Left ventricle myocardium inferior (tissue), 1 donor: ENCODE measurements at regions of chr1 and their contacts with region 1.

Region 1: GRCh38 chr1:221203224-221204054 is 324.2 kb downstream of the HLX start:
- DNase-seq: peak; percentile 76
- H3K4me3 ChIP-seq: peak overlapping the region; percentile 6
- H3K27ac ChIP-seq: peak overlapping the region; percentile 83
- H3K4me1 ChIP-seq: peaks cover 35% of the 10 kb centered on the region
- H3K27me3 ChIP-seq: no peaks in the 10 kb centered on the region
- CTCF ChIP-seq: peak; percentile 92

Region 2: DNA sequence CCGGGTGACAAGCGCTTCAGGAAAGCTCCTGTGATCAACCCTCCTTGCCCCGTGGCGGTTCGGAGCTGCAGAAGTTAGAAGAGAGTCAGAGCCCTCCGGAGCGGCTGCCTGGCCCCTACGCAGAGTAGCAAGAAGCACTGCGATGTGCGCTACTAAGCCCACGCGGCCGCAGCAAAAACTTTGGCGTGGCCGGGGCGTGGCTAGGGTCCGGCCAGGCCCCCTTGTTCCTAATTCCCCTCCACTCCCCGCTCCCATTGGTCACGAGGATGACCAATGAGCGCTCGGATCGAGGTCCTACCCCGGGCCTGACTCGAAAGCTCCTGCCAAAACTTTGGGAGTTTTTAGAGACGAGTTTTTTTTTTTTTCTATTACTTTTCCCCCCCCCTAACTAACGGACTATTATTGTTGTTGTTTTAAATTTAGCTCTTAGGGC is 324.3 kb before region 1 on chr1 and contains the start of gene HLX:
- intact Hi-C with region 1: loop called (anchors 10 kb)
- DNase-seq: peak; percentile 93
- H3K4me3 ChIP-seq: peak within 1 kb of the TSS; percentile 99
- H3K27ac ChIP-seq: peak within 1 kb of the TSS; percentile 99
- H3K4me1 ChIP-seq: peaks cover 85% of the 10 kb centered on the region
- H3K27me3 ChIP-seq: peaks cover 25% of the 10 kb centered on the region
- CTCF ChIP-seq: no peak
- total RNA-seq, gene HLX: 3.5 TPM

Region 3: DNA sequence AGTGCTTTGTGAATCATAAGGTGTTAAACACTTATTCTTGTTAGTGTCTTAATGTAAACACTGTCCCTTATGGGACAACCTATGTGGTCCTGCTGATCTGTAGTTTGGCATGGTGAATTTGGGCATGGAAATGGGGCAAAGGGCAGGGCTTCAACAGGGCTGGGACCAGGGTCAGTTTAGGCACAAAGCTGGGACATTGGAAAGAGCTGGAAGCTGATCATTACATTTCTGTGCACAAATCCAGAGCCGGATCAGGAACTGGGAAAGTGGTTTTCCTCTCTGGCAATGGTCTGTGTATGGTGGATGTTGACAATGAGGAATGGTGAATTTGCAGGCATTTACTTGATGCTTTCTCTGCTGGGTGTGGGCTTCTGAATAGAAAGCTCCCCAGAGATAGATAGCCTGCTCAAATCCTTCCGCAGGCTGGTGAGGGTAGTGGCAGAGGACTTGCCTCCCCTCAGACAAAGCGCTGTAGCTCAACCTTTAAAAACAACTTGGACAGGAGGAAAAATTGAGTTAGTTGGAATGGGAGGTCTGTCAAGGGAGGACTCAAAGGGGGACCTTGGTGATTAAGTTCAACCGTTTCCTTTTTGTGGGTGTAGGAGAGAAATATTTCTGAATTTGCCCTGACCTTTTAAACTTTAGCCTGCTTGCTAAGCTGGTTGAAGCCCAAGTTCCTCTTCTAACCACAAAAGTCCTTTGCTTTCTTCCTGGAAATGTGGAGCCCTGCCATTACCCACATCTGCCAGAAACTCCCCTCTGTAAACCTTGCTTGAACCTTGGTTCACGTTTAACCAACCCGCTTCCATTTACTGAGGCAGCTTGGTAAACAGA is 288.9 kb before region 1 on chr1:
- intact Hi-C with region 1: loop called (anchors 10 kb)
- DNase-seq: no peak
- H3K4me3 ChIP-seq: no peak overlapping the region
- H3K27ac ChIP-seq: no peak overlapping the region
- H3K4me1 ChIP-seq: peaks cover 4% of the 10 kb centered on the region
- H3K27me3 ChIP-seq: no peaks in the 10 kb centered on the region
- CTCF ChIP-seq: no peak

Region 4: GRCh38 chr1:221085712-221086375 is 117.6 kb before region 1 on chr1:
- intact Hi-C with region 1: no loop called
- DNase-seq: no peak
- H3K4me3 ChIP-seq: no peak overlapping the region
- H3K27ac ChIP-seq: peak overlapping the region; percentile 18
- H3K4me1 ChIP-seq: no peaks in the 10 kb centered on the region
- H3K27me3 ChIP-seq: no peaks in the 10 kb centered on the region
- CTCF ChIP-seq: no peak

Region 5: DNA sequence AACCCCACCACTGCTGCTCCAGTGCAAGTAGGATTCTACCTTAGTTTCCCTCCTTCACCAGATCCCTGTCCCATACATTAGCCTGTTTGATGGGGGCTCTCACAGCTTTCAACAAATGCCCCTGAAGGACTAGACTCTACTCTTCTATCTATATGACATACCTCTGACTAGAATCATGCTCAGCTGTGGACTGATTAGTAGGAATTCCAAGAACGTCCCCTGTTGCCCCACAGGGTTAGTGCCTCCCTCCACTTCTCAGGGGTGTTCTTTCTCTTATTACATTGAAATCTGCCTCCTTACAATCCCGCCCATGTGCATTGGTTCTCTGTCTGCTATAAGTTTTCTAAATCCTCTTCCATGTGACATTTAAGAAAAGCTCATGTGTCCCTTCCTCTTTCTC is 914.4 kb after region 1 on chr1:
- intact Hi-C with region 1: no loop called
- DNase-seq: no peak
- H3K4me3 ChIP-seq: no peak overlapping the region
- H3K27ac ChIP-seq: no peak overlapping the region
- H3K4me1 ChIP-seq: no peaks in the 10 kb centered on the region
- H3K27me3 ChIP-seq: peaks cover 19% of the 10 kb centered on the region
- CTCF ChIP-seq: no peak